GM10248 (cell line): ENCODE measurements at regions of chr20 and their contacts with region 1.

Region 1: DNA sequence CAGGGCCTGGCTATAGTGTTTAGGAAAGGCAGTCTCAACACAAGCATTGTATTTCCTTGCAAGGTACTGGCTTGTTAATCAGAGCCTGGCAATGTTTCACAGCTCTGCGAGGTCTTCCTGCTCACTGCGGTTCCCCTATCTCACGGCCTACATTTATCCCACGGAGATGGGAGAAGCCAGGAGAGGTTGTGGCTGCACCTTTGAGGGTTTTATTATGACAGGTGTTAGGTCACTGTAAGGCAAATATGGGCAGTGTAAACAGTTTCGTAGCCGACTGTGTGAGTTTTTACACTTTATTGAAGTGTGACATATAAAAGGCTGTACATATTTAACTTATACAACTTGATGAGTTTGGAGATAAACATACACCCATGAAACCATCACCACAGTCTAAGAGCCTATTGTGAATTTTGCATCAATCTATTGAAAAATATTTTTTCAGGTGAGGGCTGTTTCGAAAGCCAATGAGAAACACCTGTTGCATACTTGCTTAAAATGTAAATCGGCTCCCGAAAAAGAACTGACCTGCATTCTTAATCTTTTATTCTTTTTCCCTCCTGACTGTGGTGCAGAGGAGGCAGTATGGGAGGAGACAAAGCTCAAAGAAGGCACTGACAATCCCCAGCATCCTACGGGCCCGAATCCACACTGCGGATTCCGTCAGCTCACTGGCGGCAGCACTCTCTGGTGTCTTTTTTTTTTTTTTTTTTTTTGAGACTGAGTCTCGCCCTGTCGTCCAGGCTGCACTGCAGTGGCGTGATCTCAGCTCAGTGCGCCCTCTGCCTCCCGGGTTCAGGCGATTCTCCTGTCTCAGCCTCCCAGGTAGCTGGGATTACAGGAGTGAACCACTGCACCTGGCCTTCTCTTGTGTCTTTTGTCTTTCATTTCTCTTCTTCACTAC is 7.5 kb upstream of the RBM38 start:
- DNase-seq: no peak
- CTCF ChIP-seq: no peak

Region 2: DNA sequence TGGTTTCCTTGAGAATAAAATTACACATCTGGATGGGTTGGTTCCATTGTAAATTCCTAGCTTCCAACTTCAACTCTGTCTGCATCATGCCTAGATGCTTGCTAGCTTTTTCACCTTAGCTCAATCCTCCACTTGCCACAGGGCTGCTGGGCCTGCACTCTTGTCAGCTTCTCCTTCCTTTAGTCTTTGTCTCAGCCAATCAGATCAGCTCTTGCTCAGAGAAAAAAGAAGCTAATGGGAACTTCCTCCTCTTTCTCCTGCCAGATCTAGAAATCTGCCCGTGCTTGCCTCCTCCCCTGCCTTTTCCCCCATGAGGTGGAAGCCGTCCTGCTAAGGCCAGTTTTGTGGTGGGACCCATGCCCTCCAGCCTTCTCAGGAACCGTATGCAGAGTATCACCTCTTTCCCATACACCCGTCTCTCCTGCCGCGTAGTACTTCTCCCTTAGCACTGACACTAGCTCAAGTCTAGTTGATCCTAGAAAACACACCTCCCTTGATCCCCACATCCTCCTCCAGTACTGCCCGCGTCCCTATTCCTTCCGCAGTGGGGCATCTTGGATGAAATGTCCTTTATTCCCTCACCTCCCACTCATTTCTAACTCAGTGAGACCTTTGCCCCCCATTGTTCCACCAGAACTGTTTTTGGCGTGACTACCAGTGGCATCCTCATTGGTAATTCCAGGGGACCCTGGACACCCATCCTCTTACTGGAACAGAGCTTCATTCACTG is 13.9 kb before region 1 on chr20:
- CTCF ChIA-PET with region 1: interaction called, 11 read pairs
- POLR2A ChIA-PET with region 1: no interaction called
- DNase-seq: no peak
- CTCF ChIP-seq: no peak

Region 3: DNA sequence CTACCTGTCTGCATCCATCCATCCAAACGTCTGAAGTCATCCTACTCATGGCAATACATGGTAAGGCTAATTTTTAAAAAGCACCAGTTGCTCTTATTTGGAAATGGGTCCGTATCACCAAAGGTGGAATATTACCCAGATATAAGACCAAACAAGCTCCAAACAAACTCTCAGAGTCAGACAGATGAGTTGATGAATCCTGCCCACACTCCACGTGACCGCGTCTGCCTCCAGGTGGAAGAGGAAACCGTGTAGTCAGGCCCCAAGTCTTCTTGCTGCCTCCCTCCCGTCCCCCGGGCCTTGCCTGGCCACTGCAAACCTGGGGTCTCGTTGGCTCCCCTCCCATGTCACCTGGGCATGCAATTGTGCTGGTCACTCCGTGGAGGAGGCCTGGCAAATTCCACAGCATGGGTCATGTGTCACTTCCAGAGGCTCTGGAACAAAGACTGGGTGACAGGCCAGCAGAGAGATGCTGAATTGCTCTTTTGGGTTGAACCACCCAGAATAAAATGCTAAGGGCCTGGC is 109.5 kb after region 1 on chr20:
- CTCF ChIA-PET with region 1: interaction called, 38 read pairs
- POLR2A ChIA-PET with region 1: no interaction called
- DNase-seq: no peak
- CTCF ChIP-seq: no peak